GM18951 (cell line): ENCODE measurements at regions of chr19 and their contacts with region 1.

Region 1: DNA sequence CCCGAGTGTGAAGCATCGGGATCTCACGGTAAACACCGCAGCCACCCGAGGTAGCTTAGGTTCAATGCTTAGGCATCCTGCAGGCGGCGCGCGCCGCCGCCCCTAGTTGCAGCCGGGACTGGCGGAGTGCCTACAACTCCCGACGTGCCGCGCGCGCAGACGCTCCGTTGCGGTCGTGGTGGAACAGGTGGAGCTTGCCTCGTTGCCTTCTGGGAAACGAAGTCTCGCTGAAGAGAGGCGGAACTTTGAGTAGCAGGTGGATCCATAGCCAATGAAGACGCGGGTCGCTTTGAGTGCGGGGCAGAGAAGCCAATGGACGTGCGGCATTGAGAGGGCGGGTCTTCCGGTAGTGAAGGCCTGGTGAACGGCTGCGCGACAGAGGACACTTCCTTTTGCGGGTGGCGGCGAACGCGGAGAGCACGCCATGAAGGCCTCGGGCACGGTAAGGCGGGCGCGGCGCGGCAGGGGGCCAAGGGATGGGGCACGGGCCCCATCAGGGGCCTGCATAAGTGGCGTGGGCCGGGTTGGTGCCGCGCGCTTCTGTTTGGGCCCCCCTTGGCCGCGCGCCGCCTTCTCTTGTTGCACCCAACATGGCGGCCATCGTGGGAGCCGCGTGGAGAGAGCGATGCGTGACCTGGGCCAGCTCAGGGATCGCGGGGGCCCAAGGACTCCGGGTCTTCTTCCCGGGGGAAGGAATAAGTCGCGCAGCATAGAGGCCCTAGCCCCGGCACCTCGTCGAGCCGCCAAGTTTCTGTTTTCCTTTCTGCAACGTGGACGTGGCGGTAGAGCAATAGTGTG is at the start of gene RPL18A:
- POLR2A ChIP-seq: peak; percentile 97

Region 2: GRCh38 chr19:17932485-17933338 is 73.0 kb after region 1 on chr19 and contains the start of gene CCDC124:
- in situ Hi-C with region 1: loop called (anchors 5 kb)
- POLR2A ChIP-seq: peak; percentile 83

Region 3: GRCh38 chr19:17947815-17948513 is 88.2 kb after region 1 on chr19:
- in situ Hi-C with region 1: no loop called
- POLR2A ChIP-seq: peak; percentile 12